CD14-positive monocyte (primary cell): ENCODE measurements at regions of chr19 and their contacts with region 1.

Region 1: GRCh38 chr19:11787536-11787935 is 10.8 kb upstream of the ZNF491 start:
- DNase-seq: no peak
- H3K4me3 ChIP-seq: peak overlapping the region in 1 of 3 experiments; percentile 8
- H3K4me3 Mint-ChIP-seq: no peak overlapping the region
- H3K27ac ChIP-seq: no peak overlapping the region
- H3K27ac Mint-ChIP-seq: no peak overlapping the region
- H3K4me1 ChIP-seq: no peaks in the 10 kb centered on the region
- H3K4me1 Mint-ChIP-seq: no peaks in the 10 kb centered on the region
- H3K27me3 ChIP-seq: no peaks in the 10 kb centered on the region
- H3K27me3 Mint-ChIP-seq: peaks cover 0 to 4% (median 3%) of the 10 kb centered on the region in 3 donors
- CTCF ChIP-seq: no peak

Region 2: DNA sequence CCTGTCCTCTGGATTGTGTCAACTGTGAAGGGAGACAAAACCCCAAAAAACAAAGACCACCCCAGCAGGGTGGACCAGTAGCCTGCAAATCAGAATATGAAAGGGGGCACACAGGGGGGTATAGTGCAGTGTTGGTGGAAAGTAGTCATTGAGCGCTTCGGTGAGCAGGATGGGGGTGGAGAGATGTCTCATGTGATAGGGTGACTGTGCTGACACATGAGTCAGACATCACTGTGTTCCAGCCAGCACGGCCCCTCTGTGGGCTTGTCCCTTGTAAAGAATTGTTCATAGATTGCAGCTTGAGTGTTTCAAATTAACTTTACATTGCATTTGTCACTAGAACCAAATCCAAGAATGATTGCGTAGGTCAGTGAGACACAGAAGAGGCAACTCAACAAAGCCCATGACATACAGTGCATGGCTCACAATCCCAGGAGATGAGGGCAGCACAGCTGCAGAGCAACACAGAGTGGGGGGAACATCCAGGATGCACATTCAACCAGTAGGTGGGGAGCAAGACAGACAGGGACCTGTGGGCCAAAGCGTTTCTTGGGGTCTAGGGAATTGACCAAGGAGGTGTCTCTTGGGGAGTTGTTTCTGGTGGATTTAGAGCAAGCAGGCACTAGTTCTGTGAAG is 34.1 kb after region 1 on chr19:
- intact Hi-C with region 1: loop called in 1 of 2 experiments (anchors 5 kb)
- DNase-seq: no peak
- H3K4me3 ChIP-seq: no peak overlapping the region
- H3K4me3 Mint-ChIP-seq: no peak overlapping the region
- H3K27ac ChIP-seq: no peak overlapping the region
- H3K27ac Mint-ChIP-seq: peak overlapping the region in 2 of 7 donors; percentile 36 to 69
- H3K4me1 ChIP-seq: no peaks in the 10 kb centered on the region
- H3K4me1 Mint-ChIP-seq: peaks cover 13% of the 10 kb centered on the region
- H3K27me3 ChIP-seq: no peaks in the 10 kb centered on the region
- H3K27me3 Mint-ChIP-seq: peaks cover 0 to 2% (median 0%) of the 10 kb centered on the region in 3 donors
- CTCF ChIP-seq: no peak